Activated B cell treated with CpG ODN at 0.5 μM for 24 hours (primary cell): ENCODE measurements at regions of chr2 and their contacts with region 1.

Region 1: DNA sequence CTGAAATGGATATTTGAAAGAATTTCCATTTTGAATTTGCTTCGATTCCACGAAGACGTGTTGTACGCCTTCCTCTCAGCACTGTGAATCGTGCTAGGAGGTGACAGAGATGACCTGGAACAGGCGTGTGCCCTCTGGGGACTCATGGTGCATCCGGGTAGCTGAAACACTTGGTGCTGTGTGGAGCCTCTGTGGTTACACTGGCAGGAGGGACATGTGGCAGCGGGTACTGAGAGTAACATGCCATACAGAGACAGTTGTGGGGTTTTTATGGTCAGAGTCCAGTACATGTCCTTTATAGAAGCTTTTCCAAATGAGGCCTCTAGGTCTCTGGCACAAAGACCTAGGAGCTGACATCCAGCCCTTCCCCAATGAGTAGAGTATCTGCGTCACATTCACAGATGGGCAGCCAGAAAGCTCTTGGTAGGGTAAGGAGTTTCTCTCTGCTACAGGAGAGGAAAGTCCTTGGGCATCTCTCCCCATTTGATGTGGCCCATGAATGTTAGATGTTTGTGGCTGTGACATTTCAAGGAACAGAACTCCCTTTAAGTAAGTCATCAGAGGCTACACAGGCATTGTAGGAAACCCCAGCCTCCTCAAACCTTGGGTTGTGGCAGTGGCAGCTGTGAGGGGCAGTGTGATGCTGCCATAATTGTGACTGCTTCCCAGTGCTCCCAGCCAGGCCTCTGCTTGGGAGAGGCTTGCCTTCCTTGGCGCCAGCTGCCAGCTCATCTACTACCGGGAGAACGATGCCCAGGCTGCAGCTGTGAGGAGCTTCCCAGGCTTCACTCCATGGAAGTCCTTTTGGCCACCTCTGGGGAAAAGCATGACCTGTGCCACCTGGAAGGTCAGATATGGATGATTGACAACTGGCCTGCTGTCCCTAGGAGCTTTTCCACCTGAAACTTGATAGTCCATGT is 80.6 kb downstream of the ACOXL start:
- DNase-seq: no peak
- ATAC-seq: no peak
- H3K4me3 Mint-ChIP-seq: no peak overlapping the region
- H3K27ac Mint-ChIP-seq: no peak overlapping the region
- H3K4me1 Mint-ChIP-seq: peaks cover 3% of the 10 kb centered on the region
- H3K27me3 Mint-ChIP-seq: peaks cover 8% of the 10 kb centered on the region
- CTCF ChIP-seq: no peak

Region 2: GRCh38 chr2:109558076-109558882 is 1254.7 kb before region 1 on chr2:
- CTCF ChIA-PET with region 1: no interaction called
- POLR2A ChIA-PET with region 1: no interaction called
- intact Hi-C with region 1: no loop called
- DNase-seq: no peak
- ATAC-seq: no peak
- H3K4me3 Mint-ChIP-seq: no peak overlapping the region
- H3K27ac Mint-ChIP-seq: no peak overlapping the region
- H3K4me1 Mint-ChIP-seq: no peaks in the 10 kb centered on the region
- H3K27me3 Mint-ChIP-seq: peaks cover 4% of the 10 kb centered on the region
- CTCF ChIP-seq: no peak

Region 3: DNA sequence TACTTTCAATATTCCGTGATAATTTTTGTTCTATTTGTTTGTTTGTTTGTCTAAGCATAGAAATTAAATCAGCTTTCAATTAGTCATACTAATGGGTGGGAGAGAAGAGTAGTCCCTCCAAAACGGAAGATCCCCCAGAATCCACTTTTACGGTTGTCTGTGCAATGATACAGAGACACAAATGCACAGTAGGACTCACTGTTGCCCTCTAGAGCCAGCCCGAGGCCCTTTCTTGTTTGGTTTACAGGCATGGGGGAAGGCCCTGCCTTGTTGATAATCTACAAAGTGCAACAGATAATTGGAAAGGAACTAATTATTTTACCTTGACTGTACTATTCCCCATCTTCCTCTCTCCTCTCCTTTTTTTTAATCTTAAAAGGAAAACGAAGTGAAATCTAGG is 40.5 kb after region 1 on chr2:
- CTCF ChIA-PET with region 1: no interaction called
- POLR2A ChIA-PET with region 1: no interaction called
- intact Hi-C with region 1: loop called (anchors 2 kb)
- DNase-seq: no peak
- ATAC-seq: peak; percentile 27
- H3K4me3 Mint-ChIP-seq: no peak overlapping the region
- H3K27ac Mint-ChIP-seq: no peak overlapping the region
- H3K4me1 Mint-ChIP-seq: peaks cover 34% of the 10 kb centered on the region
- H3K27me3 Mint-ChIP-seq: no peaks in the 10 kb centered on the region
- CTCF ChIP-seq: no peak

Region 4: DNA sequence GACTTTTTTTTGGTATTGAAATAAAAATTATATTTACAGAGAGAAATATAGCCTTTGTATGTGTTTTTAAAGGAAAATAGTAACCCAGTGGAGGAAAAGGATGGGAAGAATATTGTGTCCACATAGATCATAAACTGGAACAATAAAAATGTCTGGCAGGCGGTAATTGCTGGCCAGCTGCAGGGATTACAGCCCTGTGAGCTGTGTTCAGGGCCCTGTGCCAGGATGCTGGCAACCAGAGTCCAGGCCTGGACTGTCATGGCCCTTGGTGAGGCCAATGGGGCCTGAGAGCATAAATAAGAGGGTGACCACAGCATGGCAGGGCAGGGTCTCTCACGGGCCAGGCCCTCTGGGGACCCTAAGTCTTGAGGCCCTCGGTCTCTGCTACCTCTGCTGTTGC is 90.6 kb after region 1 on chr2:
- CTCF ChIA-PET with region 1: no interaction called
- POLR2A ChIA-PET with region 1: no interaction called
- intact Hi-C with region 1: no loop called
- DNase-seq: no peak
- ATAC-seq: no peak
- H3K4me3 Mint-ChIP-seq: no peak overlapping the region
- H3K27ac Mint-ChIP-seq: no peak overlapping the region
- H3K4me1 Mint-ChIP-seq: no peaks in the 10 kb centered on the region
- H3K27me3 Mint-ChIP-seq: peaks cover 2% of the 10 kb centered on the region
- CTCF ChIP-seq: no peak

Region 5: DNA sequence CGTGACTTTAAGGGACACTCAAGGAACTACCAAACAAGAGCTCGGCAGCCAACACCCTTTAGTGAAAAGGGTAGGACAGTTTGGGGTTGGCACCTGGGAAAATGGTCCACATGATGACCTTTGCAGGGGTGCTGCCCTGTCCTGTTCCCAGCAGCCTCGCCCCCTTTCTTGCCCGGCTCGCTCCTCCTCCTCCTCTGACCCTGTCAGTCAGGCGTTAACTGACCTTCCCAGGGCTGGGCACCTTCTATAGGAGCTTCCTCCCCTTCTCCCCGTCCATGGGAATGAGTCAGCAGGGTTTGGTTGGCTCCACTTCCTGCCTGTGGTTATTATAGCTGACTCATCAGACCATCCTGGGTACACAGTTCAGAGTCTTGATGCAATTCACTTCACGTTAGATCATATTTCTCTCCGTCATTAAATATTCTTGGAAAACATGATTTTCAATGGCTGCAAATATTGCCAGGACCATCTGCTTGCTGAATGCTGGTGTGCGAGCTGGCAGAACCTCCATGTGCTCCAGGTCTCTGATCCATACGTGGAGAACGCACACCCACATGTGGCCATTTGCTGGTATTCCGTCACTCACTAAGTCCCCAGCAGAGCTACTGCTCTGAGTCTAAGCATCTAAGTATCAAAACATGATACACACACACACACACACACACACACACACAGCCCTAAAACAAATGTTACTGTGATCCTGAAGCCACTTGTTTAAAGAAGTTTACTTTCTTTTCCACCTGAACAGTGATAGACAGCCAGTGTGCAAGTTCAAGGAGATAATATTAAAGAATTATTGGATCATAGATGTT is 886.0 kb after region 1 on chr2:
- CTCF ChIA-PET with region 1: interaction called, 4 read pairs
- POLR2A ChIA-PET with region 1: no interaction called
- intact Hi-C with region 1: loop called (anchors 2 kb)
- DNase-seq: no peak
- ATAC-seq: no peak
- H3K4me3 Mint-ChIP-seq: no peak overlapping the region
- H3K27ac Mint-ChIP-seq: no peak overlapping the region
- H3K4me1 Mint-ChIP-seq: peaks cover 13% of the 10 kb centered on the region
- H3K27me3 Mint-ChIP-seq: peaks cover 10% of the 10 kb centered on the region
- CTCF ChIP-seq: no peak